Activated naive CD4-positive, alpha-beta T cell treated with anti-CD3 and anti-CD28 coated beads for 36 hours (primary cell): ENCODE measurements at regions of chr1 and their contacts with region 1.

Region 1: DNA sequence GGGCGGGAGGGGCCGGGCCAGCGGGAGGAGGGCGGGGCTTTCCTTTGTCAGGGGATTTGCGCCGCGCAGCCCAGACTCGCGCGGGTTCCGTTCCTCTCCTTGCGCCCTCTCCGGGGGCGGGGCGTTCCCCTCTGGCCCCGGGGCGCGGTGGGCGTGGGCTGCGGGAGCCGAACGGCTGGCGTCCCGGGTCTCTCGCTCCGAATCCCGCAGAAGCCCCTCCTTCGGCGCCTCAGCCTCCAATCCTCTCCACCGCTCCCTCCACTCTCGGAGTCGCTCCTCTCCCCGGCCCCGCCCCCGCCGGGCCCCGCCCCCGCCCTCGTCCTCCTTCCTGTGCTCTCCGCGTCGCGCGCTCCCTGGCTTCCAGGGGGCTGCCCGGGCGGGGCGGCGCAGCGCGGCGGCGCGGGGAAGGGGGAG is 82.8 kb upstream of the BMP8A start:
- DNase-seq: peak; percentile 82
- H3K4me3 Mint-ChIP-seq: peak overlapping the region; percentile 81
- H3K27ac Mint-ChIP-seq: no peak overlapping the region
- H3K4me1 Mint-ChIP-seq: peaks cover 60% of the 10 kb centered on the region
- H3K27me3 Mint-ChIP-seq: no peaks in the 10 kb centered on the region

Region 2: DNA sequence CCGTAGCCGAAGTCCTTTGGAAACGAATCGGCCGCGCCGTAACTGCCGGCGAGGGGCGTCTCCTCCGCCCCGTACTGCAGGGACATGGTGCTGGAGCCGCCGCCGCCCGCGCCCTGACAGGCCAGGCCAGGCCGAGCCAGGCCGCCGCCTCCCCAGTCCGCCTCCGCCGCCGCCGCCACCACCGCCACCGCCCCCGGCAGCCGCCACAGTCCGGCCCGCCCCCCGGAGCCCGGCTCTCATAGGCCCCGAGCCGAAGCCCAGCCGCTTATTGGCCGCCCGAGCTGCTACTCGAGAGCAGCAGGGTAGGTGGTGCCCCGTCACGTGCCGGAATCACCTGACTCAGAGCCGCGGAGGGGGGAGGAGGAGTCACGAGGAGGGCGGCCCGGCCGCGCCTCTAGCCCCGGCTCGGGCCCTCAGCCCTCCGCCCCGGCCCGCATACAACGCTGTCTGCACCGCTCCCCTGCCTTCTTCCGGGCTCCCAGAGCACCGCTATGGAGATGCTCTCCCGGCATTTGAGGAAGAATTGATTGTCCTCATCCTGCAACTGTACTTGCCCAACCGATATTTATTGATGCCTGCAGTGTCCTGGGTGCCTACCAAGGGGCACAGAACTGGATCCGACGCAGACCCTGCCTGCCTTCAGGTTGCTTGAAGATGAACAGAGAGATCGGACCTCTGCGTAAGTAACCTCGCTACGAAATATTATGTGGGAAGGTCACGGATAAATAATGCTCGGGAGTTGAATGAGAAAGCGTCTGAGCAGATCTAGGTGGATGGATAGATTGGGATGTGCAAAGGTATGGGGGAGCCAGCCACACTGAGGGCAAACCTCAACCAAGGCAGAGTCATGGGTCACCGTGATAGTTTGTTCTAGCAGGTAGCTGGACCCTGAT is 548.8 kb before region 1 on chr1 and contains the start of gene RRAGC:
- CTCF ChIA-PET with region 1: no interaction called
- intact Hi-C with region 1: loop called (anchors 5 kb)
- DNase-seq: peak; percentile 99
- H3K4me3 Mint-ChIP-seq: peak within 1 kb of the TSS; percentile 86
- H3K27ac Mint-ChIP-seq: peak within 1 kb of the TSS; percentile 91
- H3K4me1 Mint-ChIP-seq: peaks cover 51% of the 10 kb centered on the region
- H3K27me3 Mint-ChIP-seq: no peaks in the 10 kb centered on the region
- total RNA-seq, gene RRAGC: 22.3 to 23.3 TPM

Region 3: GRCh38 chr1:39026051-39026865 is 382.4 kb before region 1 on chr1 and contains the start of gene NDUFS5:
- CTCF ChIA-PET with region 1: no interaction called
- intact Hi-C with region 1: no loop called
- DNase-seq: peak; percentile 92
- H3K4me3 Mint-ChIP-seq: peak within 1 kb of the TSS; percentile 98
- H3K27ac Mint-ChIP-seq: peak within 1 kb of the TSS; percentile 98
- H3K4me1 Mint-ChIP-seq: peaks cover 32% of the 10 kb centered on the region
- H3K27me3 Mint-ChIP-seq: no peaks in the 10 kb centered on the region
- total RNA-seq, gene NDUFS5: 226 TPM

Region 4: DNA sequence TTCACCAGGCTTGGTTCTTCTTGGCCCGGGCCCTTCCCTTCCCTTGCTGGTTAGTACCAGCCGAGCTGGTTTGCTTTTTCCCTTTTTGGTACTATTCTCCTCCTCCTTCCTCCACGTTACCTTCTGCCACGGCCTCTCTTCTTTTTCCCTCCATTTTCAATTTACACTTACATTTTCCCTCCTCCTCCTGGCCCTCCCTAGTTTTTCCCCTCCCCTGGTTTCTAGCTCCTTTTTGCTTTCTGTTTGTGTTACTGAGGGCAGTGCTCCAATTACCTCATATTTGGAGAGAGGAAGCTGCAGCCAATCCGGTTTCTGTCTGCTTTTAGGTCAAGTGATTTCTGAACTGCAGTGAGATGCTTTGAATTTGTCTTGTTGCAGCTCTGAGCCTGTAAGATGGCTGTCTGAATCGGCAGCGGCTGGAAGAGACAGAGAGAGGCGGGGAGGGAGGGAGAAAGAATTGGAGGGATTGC is 140.5 kb before region 1 on chr1:
- CTCF ChIA-PET with region 1: interaction called, 7 read pairs
- intact Hi-C with region 1: loop called (anchors 2 kb)
- DNase-seq: peak; percentile 30
- H3K4me3 Mint-ChIP-seq: peak overlapping the region; percentile 69
- H3K27ac Mint-ChIP-seq: peak overlapping the region; percentile 54
- H3K4me1 Mint-ChIP-seq: peaks cover 75% of the 10 kb centered on the region
- H3K27me3 Mint-ChIP-seq: no peaks in the 10 kb centered on the region

Region 5: DNA sequence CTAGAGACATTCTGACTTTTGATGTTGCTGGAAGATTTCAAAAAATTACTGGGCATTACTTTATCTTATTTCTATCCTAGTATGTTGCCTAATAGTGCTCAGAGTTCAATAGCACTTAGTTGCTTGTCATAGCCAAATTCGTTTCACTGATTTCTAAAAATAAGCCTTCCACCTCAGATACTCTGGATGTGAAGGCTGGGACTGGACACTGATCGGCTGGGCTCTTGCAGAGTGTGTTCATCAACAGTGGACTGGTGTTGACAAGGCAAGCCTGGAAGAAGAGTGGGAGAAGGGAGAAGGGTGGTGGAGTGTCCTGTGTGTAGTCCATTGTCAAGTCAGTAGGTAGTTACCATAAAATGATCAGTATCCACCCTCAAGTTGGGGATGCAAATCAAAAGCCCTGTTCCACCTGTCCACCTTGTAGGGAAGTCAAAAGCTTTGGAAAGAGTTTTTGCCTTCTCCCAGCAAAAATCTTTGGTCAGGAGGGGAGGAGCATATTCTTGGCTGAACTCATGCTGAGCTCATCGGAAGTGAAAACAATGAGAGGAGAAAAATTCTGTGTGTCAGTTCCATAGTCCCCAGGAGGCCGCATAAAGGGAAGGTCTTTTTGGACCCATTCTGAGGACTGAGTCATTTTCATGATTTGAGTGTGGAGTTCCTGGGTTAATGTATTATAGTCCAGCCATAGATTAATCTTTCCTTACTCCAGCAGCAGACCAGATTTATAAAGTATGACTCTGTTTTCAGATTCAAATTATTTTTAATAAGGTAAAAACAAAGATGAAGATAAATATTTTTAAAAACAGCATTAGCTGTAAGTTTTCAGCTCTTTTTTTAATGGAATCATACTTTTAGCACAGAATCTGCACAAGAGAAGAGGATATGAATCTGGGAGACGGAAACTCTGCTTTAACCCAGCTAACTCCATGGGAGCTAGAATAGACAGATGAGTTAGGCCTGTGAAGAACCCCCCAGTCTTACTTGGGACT is 16.7 kb before region 1 on chr1:
- CTCF ChIA-PET with region 1: interaction called, 42 read pairs
- intact Hi-C with region 1: no loop called
- DNase-seq: no peak
- H3K4me3 Mint-ChIP-seq: no peak overlapping the region
- H3K27ac Mint-ChIP-seq: no peak overlapping the region
- H3K4me1 Mint-ChIP-seq: peaks cover 62% of the 10 kb centered on the region
- H3K27me3 Mint-ChIP-seq: no peaks in the 10 kb centered on the region

Region 6: GRCh38 chr1:39425151-39425550 is 16.5 kb after region 1 on chr1:
- CTCF ChIA-PET with region 1: interaction called, 10 read pairs
- intact Hi-C with region 1: no loop called
- DNase-seq: no peak
- H3K4me3 Mint-ChIP-seq: no peak overlapping the region
- H3K27ac Mint-ChIP-seq: peak overlapping the region; percentile 2
- H3K4me1 Mint-ChIP-seq: peaks cover 11% of the 10 kb centered on the region
- H3K27me3 Mint-ChIP-seq: no peaks in the 10 kb centered on the region